Activated naive CD4-positive, alpha-beta T cell treated with anti-CD3 and anti-CD28 coated beads, Interleukin-2, amount 10 ng/mL, durations not matched to agents 7 days and 5 days (primary cell): ENCODE measurements at regions of chr11 and their contacts with region 1.

Region 1: DNA sequence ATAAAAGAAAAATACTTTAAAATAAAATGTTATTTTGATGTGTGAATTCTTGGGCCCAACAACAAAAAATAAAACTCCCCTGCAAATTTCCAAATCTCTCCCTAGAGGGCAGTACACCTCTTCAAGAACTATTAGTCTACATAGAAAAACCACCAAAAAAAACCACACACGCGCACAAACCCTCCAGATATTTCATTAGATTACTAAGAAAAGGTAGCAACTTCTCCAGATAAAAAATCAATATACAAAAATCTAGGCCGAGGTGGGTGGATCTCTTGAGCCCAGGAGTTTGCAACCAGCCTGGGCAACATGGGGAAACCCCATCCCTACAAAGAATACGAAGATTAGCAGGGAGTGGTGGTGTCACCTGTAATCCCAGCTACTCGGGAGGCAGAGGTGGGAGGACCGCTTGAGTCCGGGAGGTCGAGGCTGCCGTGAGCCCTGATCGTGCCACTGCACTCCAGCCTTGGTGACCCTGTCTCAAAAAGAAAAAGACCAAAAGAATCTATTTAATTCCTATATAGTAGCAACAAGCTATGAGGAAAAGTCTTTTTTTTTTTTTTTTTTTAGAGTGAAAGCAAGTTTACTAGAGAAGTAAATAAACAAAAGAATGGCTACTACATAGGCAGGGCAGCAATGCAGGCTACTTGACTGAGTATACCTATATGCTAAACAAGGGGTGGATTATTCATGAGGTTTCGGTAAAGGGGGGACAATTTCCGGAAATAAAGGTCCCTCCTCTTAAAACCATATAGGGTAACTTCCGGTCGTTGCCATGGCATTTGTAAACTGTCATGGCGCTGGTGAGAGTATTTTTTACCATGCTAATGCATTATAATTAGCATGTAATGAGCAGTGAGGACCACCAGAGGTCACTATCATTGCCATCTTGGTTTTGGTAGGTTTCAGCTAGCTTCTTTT is 13.1 kb downstream of the B3GNT6 start:
- DNase-seq: peak; percentile 86
- H3K4me3 Mint-ChIP-seq: peak overlapping the region; percentile 48
- H3K27ac Mint-ChIP-seq: peak overlapping the region; percentile 30
- H3K4me1 Mint-ChIP-seq: peaks cover 16% of the 10 kb centered on the region
- H3K27me3 Mint-ChIP-seq: peaks cover 22% of the 10 kb centered on the region

Region 2: GRCh38 chr11:77066229-77067042 is 19.2 kb after region 1 on chr11 and contains the start of gene CAPN5:
- CTCF ChIA-PET with region 1: interaction called, 11 read pairs
- DNase-seq: peak; percentile 88
- H3K4me3 Mint-ChIP-seq: peak within 1 kb of the TSS; percentile 71
- H3K27ac Mint-ChIP-seq: peak within 1 kb of the TSS; percentile 24
- H3K4me1 Mint-ChIP-seq: peaks cover 10% of the 10 kb centered on the region
- H3K27me3 Mint-ChIP-seq: peaks cover 74% of the 10 kb centered on the region

Region 3: DNA sequence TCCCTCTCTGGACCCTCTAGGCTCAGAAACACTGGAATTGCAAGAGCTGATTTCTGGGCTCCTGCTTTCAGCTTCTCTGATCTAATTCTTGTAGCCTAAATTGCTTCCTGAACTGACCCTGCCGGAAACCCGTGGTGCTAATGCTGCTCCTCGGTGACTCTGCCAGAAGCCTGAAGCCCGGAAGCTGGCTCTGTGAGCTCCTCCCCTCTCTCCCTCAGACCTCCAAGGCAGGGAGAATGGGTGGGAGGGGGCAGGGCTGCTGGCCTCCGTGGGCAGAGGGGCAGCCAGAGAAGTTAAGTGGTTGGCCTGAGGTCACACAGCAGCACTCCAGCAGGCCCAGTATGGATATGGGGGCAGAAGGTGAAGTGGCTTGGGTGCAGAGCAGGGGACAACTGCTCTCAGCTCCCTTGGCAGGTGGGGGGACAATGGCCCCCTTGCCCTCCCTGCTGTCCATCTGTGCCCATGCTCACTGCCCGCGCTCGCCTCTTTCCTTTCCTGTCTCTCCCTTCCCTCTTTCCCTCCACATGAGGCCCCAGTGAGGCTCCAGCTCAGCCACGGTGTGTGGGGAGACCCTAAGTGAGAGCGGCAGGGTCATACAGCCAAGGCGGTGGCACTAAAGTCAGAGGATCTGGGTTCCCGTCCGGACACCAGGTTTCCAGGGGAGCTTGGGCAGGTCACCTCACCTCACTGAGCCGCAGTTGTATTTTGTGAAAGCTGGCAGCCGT is 35.7 kb after region 1 on chr11:
- CTCF ChIA-PET with region 1: interaction called, 152 read pairs
- DNase-seq: peak; percentile 81
- H3K4me3 Mint-ChIP-seq: peak overlapping the region; percentile 71
- H3K27ac Mint-ChIP-seq: peak overlapping the region; percentile 98
- H3K4me1 Mint-ChIP-seq: peaks cover 26% of the 10 kb centered on the region
- H3K27me3 Mint-ChIP-seq: peaks cover 10% of the 10 kb centered on the region